Prostate gland (tissue), 2 donors: ENCODE measurements at regions of chr13 and their contacts with region 1.

Region 1: DNA sequence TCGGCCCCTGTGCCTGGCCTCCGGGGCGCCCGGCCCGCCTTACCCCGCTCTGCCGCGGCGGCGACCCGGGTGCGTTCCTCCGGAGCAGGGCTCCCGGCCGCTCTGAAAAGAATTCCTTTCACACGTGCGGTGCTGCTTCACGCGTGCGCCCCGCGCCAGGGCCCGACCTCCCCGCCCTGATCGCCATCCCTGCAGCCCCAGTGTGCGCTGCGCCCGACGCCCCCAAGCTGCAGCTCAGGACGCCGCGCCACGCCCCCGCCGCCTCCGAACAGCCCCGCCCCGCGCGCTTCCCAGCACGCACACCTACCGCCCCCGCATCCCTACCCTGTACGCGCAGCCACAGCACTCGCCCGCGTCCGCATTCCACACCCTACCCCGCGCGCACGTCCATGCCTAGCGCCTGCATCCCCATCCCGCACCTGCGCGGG is at the start of gene GJA3:
- DNase-seq: no peak
- H3K4me3 ChIP-seq: peak within 1 kb of the TSS; percentile 11 to 33
- H3K27ac ChIP-seq: no peak within 1 kb of the TSS
- H3K4me1 ChIP-seq: no peaks in the 10 kb centered on the region
- H3K27me3 ChIP-seq: peaks cover 10% of the 10 kb centered on the region
- CTCF ChIP-seq: no peak
- POLR2A ChIP-seq: no peak
- total RNA-seq, gene GJA3: 0.59 to 5.2 TPM

Region 2: DNA sequence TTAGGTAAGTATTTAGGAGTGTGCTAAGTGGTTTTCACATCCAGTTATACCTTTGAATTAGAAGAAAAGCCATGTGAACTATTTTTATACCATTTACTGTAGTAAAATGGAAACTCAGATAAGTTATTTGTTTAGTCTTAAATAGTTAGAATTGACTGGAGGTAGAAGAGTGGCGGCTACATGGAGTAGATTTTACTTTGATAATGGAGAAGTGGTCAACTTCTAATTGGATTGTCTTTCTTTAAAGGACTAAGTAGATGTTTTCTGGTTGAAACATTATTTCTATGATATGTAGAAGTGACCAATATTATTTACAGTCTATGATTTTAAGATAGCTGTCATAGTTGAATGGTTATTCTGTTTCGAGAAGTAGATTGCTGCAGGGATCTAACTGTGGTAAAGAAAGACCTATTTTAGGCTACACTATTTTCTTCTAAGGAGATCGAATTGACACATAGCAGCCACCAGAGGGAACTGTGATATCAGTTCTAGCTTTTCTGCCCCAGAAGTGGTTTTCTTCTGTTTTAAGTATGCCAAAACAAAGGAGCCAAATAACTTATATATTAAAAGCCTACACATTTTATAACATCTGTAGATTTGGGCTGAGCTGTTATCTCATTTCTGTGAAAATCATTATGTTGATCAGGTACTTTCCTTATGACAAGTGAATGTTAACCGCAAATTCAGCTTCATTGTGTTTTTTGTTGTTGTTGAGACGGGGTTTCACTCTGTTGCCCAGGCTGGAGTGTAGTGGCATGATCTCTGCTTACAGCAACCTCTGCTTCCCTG is 176.2 kb before region 1 on chr13:
- intact Hi-C with region 1: loop called (anchors 10 kb)
- DNase-seq: no peak
- H3K4me3 ChIP-seq: no peak overlapping the region
- H3K27ac ChIP-seq: no peak overlapping the region
- H3K4me1 ChIP-seq: no peaks in the 10 kb centered on the region
- H3K27me3 ChIP-seq: no peaks in the 10 kb centered on the region
- CTCF ChIP-seq: peak in 3 of 4 experiments; percentile 16 to 42 (median 26)
- POLR2A ChIP-seq: no peak